Ovary (tissue), 10 donors: ENCODE measurements at regions of chr3 and their contacts with region 1.

Region 1: DNA sequence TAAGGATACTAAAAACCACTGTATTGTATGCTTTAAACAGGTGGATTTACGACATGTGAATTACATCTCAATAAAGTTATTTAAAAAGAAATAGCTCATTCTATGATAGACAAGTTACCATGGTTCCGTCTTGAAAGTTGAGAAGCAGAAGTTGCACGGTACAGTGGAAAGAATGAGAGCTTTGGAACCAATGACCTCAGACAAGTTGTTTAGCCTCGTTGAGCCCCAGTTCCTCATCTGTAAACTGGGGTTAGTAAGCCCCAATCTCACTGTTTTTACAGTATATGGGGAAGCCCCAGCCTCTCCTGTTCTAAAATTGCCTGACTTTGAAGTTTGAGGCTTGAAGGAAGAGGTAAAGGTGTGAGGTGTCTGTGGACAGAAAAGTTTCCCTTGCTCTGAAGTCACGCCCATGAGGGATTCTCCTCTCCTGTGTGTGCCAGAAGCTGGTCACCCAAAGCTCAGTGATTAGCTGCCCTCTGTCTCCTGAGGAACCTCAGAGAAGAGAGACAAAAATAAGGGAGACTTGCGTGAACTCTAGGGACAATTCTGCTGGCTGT is 10.0 kb downstream of the CRYGS start:
- DNase-seq: no peak
- H3K4me3 ChIP-seq: no peak overlapping the region
- H3K27ac ChIP-seq: no peak overlapping the region
- H3K4me1 ChIP-seq: no peaks in the 10 kb centered on the region
- H3K27me3 ChIP-seq: no peaks in the 10 kb centered on the region
- CTCF ChIP-seq: no peak
- EP300 ChIP-seq: no peak
- POLR2A ChIP-seq: no peak

Region 2: DNA sequence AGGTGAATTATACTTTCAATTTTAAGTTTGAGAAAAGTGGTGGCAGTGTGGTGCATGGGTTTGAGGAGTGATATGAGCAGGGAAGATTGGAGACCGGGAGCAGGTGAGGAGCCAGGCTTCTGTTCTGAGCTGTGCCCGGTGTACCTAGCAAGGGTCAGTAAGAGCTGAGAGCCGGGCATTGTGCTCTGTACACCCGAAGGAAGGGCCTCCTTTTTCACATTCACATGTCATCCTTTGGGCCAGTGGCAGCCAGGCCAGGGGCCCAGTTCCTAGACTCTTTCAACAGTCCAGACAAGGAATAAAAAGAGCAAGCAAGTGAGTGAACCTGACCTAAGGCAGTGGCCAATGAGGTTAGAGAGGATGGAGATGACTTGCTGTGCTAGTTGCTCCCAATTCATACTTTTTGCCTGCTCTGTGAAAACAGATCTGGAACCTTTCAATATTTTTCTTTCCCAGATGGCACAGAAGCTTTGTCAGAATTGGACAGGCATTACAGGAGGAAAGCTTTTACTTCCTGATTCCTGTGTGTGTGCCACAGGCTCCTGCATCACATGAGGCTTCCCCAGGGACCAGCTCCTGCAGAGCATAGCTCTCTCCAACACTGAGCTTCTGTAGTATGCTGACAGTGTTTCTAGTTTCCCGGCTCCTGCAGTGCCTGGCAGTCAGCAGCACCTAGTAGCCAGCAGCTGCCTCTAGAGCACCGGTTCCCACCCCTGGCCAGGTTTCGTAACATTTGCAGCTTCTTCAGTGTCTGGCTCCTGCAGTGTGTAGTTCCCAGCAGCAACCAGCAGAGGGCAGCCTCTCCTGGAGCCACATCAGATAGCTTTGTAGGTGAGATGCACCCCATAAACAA is 591.1 kb before region 1 on chr3:
- intact Hi-C with region 1: no loop called
- DNase-seq: peak; percentile 72 to 86 (median 81)
- H3K4me3 ChIP-seq: no peak overlapping the region
- H3K27ac ChIP-seq: no peak overlapping the region
- H3K4me1 ChIP-seq: peaks cover 2% of the 10 kb centered on the region
- H3K27me3 ChIP-seq: no peaks in the 10 kb centered on the region
- CTCF ChIP-seq: peak; percentile 74 to 94 (median 82)
- EP300 ChIP-seq: no peak
- POLR2A ChIP-seq: no peak

Region 3: DNA sequence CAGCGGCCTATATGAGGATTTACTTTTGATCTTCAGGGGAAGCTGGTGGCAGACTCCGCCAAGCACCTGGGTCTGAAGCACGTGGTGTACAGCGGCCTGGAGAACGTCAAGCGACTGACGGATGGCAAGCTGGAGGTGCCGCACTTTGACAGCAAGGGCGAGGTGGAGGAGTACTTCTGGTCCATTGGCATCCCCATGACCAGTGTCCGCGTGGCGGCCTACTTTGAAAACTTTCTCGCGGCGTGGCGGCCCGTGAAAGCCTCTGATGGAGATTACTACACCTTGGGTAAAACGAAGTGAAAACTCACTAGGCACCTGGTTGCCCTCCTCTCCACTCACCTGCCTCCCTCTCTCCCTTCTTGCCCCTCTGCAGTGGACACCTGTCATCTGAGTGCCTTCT is 562.6 kb before region 1 on chr3:
- intact Hi-C with region 1: loop called in 1 of 4 experiments (anchors 5 kb)
- DNase-seq: no peak
- H3K4me3 ChIP-seq: no peak overlapping the region
- H3K27ac ChIP-seq: no peak overlapping the region
- H3K4me1 ChIP-seq: no peaks in the 10 kb centered on the region
- H3K27me3 ChIP-seq: no peaks in the 10 kb centered on the region
- CTCF ChIP-seq: no peak
- EP300 ChIP-seq: no peak
- POLR2A ChIP-seq: no peak

Region 4: GRCh38 chr3:186588337-186589006 is 54.3 kb after region 1 on chr3:
- intact Hi-C with region 1: no loop called
- DNase-seq: no peak
- H3K4me3 ChIP-seq: no peak overlapping the region
- H3K27ac ChIP-seq: no peak overlapping the region
- H3K4me1 ChIP-seq: no peaks in the 10 kb centered on the region
- H3K27me3 ChIP-seq: no peaks in the 10 kb centered on the region
- CTCF ChIP-seq: no peak
- EP300 ChIP-seq: no peak
- POLR2A ChIP-seq: no peak

Region 5: GRCh38 chr3:186772701-186773424 is 238.7 kb after region 1 on chr3:
- intact Hi-C with region 1: no loop called
- DNase-seq: peak; percentile 20 to 53 (median 35)
- H3K4me3 ChIP-seq: peak overlapping the region; percentile 30
- H3K27ac ChIP-seq: no peak overlapping the region
- H3K4me1 ChIP-seq: peaks cover 4% of the 10 kb centered on the region
- H3K27me3 ChIP-seq: no peaks in the 10 kb centered on the region
- CTCF ChIP-seq: no peak
- EP300 ChIP-seq: no peak
- POLR2A ChIP-seq: no peak

Region 6: GRCh38 chr3:187227658-187228258 is 693.6 kb after region 1 on chr3:
- intact Hi-C with region 1: no loop called
- DNase-seq: no peak
- H3K4me3 ChIP-seq: no peak overlapping the region
- H3K27ac ChIP-seq: no peak overlapping the region
- H3K4me1 ChIP-seq: no peaks in the 10 kb centered on the region
- H3K27me3 ChIP-seq: no peaks in the 10 kb centered on the region
- CTCF ChIP-seq: no peak
- EP300 ChIP-seq: no peak
- POLR2A ChIP-seq: no peak